Activated T-helper 2 cell treated with anti-CD3 and anti-CD28 coated beads, Interferon-gamma antibody, Interleukin-2, Interleukin-4, amounts not matched to agents 10 μg/mL and 5 μg/mL and 100 μg/mL, durations not matched to agents 14 hours and 24 hours and 36 hours (primary cell): ENCODE measurements at regions of chr3 and their contacts with region 1.

Region 1: DNA sequence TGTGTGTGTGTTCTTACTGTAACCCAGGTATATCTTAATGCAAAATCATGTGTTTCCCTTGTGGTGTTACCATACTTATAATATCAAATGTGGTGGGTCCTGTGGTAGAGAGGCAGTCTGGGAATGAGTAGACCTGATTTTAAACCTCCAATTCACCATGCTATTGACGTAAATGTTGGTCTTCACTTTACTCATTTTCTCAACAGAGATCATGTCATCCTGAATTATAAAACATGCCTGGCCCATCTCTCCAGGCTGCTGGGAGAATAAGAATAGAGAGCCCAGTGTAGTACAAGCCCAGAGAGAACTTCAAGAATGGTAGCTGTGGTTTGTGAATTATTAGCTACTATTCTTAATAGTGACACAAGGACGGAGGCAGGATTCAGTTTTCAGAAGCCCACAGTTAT is 88.1 kb downstream of the MBNL1 start:
- DNase-seq: no peak
- H3K4me3 Mint-ChIP-seq: no peak overlapping the region
- H3K27ac Mint-ChIP-seq: peak overlapping the region; percentile 15
- H3K4me1 Mint-ChIP-seq: peaks cover 56% of the 10 kb centered on the region
- H3K27me3 Mint-ChIP-seq: no peaks in the 10 kb centered on the region

Region 2: GRCh38 chr3:152322756-152323155 is 34.1 kb before region 1 on chr3:
- intact Hi-C with region 1: loop called (anchors 5 kb)
- DNase-seq: no peak
- H3K4me3 Mint-ChIP-seq: peak overlapping the region; percentile 11
- H3K27ac Mint-ChIP-seq: peak overlapping the region; percentile 40
- H3K4me1 Mint-ChIP-seq: peaks cover 63% of the 10 kb centered on the region
- H3K27me3 Mint-ChIP-seq: no peaks in the 10 kb centered on the region

Region 3: GRCh38 chr3:152402695-152403451 is 46.0 kb after region 1 on chr3:
- intact Hi-C with region 1: loop called (anchors 5 kb)
- DNase-seq: no peak
- H3K4me3 Mint-ChIP-seq: no peak overlapping the region
- H3K27ac Mint-ChIP-seq: peak overlapping the region; percentile 64
- H3K4me1 Mint-ChIP-seq: peaks cover 59% of the 10 kb centered on the region
- H3K27me3 Mint-ChIP-seq: no peaks in the 10 kb centered on the region